ENCODE measurements at regions of chr1 and their contacts with region 1.

Region 1: GRCh38 chr1:202274611-202275010 is 67.1 kb downstream of the UBE2T start:
- DNase-seq: no peak
- H3K4me3 ChIP-seq: no peak overlapping the region
- H3K27ac ChIP-seq: no peak overlapping the region
- H3K4me1 ChIP-seq: no peaks in the 10 kb centered on the region
- H3K27me3 ChIP-seq: no peaks in the 10 kb centered on the region
- CTCF ChIP-seq: peak; percentile 66
- EP300 ChIP-seq: no peak
- POLR2A ChIP-seq: no peak
- RAD21 ChIP-seq: peak; percentile 56 to 73

Region 2: DNA sequence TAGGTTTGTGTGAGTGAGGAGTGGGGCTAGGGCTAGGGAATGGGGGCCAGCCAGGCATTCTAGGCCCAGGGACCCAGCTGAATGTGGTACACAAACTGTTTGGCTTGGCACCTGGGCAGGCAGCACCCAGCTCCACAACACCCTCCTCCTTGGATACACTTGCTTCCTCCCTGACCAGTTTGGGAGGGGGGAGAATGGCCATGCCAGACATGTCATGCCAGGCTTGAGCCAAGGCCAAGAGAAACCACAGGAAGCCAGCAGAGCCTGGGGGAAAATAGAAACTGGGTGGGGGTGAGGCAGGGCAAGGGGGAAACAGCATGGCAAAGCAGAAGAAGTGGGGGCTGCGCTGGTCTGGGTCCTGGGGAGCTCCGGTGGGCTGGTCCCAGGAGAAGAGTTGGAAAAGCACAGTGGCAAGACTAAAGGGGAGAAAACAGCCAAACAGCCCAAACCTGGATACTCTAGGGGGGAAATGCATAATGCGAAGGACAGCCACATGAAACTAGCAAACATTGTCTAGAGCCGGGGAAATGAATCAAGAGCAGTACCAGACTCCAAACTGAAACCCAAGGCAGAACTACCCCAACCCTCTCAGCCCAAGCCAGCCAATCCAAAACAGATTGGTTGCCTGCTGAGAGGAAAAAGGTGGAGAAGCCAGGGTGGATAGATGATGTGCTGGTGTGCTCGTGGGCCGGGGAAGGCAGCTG is 33.1 kb before region 1 on chr1:
- CTCF ChIA-PET with region 1: interaction called, 18 read pairs
- POLR2A ChIA-PET with region 1: no interaction called
- DNase-seq: no peak
- H3K4me3 ChIP-seq: no peak overlapping the region
- H3K27ac ChIP-seq: no peak overlapping the region
- H3K4me1 ChIP-seq: peaks cover 0 to 10% (median 6%) of the 10 kb centered on the region in 4 experiments; a peak in 6 of 7 replicates
- H3K27me3 ChIP-seq: no peaks in the 10 kb centered on the region
- CTCF ChIP-seq: no peak
- EP300 ChIP-seq: no peak
- POLR2A ChIP-seq: no peak
- RAD21 ChIP-seq: no peak

Region 3: DNA sequence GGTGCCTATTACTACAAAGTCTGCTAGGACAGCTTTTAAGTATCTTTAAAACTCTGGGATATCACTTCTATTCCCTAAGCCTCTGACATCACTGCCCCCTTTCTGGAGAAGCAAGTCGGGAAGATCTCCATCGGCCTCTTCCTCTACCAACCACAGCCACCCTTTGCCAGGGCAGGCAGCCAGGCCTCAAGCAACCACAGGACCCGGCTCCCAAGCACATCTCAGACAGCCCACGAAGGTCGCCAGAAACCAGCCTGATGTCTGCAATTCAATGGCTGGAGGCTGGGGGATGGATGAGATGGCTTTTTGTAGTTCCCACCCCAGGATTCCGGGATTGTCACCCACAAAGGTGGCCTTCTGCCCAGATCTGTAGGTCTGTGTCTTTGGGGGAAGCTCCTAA is 10.3 kb before region 1 on chr1:
- CTCF ChIA-PET with region 1: interaction called, 13 read pairs
- POLR2A ChIA-PET with region 1: no interaction called
- DNase-seq: no peak
- H3K4me3 ChIP-seq: no peak overlapping the region
- H3K27ac ChIP-seq: no peak overlapping the region
- H3K4me1 ChIP-seq: peaks cover 0 to 4% (median 1%) of the 10 kb centered on the region in 4 experiments; a peak in 1 of 7 replicates
- H3K27me3 ChIP-seq: no peaks in the 10 kb centered on the region
- CTCF ChIP-seq: no peak
- EP300 ChIP-seq: no peak
- POLR2A ChIP-seq: no peak
- RAD21 ChIP-seq: no peak

Region 4: DNA sequence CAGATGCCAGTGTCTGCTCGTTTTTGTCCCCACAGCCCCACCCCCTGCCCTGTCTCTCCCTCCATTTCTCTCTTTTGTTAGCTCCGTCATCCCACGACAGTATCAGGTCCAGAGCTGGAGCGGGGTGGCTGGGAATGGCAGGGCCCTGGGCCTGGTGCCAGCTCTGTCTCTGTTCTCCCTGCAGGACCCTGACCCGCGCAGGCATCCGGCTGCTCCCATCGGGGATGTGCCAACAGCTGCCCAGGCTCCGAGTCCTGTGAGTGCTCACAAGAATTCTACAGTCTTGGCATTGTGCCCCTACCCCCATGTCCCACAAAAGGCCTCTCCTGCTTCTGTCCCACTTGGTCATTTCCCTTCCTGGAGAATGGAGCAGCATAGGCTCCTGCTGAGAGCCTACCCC is 29.8 kb after region 1 on chr1:
- CTCF ChIA-PET with region 1: interaction called, 12 read pairs
- POLR2A ChIA-PET with region 1: no interaction called
- DNase-seq: no peak
- H3K4me3 ChIP-seq: no peak overlapping the region
- H3K27ac ChIP-seq: no peak overlapping the region
- H3K4me1 ChIP-seq: no peaks in the 10 kb centered on the region
- H3K27me3 ChIP-seq: no peaks in the 10 kb centered on the region; a peak in 1 of 7 replicates
- CTCF ChIP-seq: no peak
- EP300 ChIP-seq: no peak
- POLR2A ChIP-seq: no peak
- RAD21 ChIP-seq: no peak

Region 5: GRCh38 chr1:202615501-202616354 is 341.1 kb after region 1 on chr1:
- CTCF ChIA-PET with region 1: no interaction called
- POLR2A ChIA-PET with region 1: no interaction called
- DNase-seq: no peak
- H3K4me3 ChIP-seq: no peak overlapping the region
- H3K27ac ChIP-seq: no peak overlapping the region
- H3K4me1 ChIP-seq: peaks cover 3 to 9% (median 7%) of the 10 kb centered on the region in 4 experiments; a peak in 5 of 7 replicates
- H3K27me3 ChIP-seq: no peaks in the 10 kb centered on the region
- CTCF ChIP-seq: no peak
- EP300 ChIP-seq: no peak
- POLR2A ChIP-seq: no peak
- RAD21 ChIP-seq: no peak

Measured in H1 (cell line).